Sigmoid colon (tissue), 7 donors: ENCODE measurements at regions of chrX and their contacts with region 1.

Region 1: GRCh38 chrX:53317365-53318069 is 36.1 kb upstream of the IQSEC2 start:
- DNase-seq: peak; percentile 83
- H3K4me3 ChIP-seq: no peak overlapping the region
- H3K27ac ChIP-seq: no peak overlapping the region
- H3K4me1 ChIP-seq: peaks cover 0 to 31% (median 14%) of the 10 kb centered on the region in 4 donors
- H3K27me3 ChIP-seq: peaks cover 0 to 8% (median 0%) of the 10 kb centered on the region in 3 donors
- CTCF ChIP-seq: peak; percentile 46 to 68 (median 58)
- EP300 ChIP-seq: no peak
- POLR2A ChIP-seq: no peak

Region 2: GRCh38 chrX:53284684-53285447 is 32.7 kb before region 1 on chrX:
- intact Hi-C with region 1: loop called (anchors 5 kb)
- DNase-seq: peak; percentile 83
- H3K4me3 ChIP-seq: no peak overlapping the region
- H3K27ac ChIP-seq: peak overlapping the region in 3 of 4 donors; percentile 47 to 77 (median 70)
- H3K4me1 ChIP-seq: peaks cover 0 to 69% (median 51%) of the 10 kb centered on the region in 4 donors
- H3K27me3 ChIP-seq: no peaks in the 10 kb centered on the region
- CTCF ChIP-seq: peak; percentile 54 to 70 (median 66)
- EP300 ChIP-seq: no peak
- POLR2A ChIP-seq: no peak

Region 3: GRCh38 chrX:53330331-53330730 is 12.8 kb after region 1 on chrX:
- intact Hi-C with region 1: loop called (anchors 1 kb)
- DNase-seq: no peak
- H3K4me3 ChIP-seq: no peak overlapping the region
- H3K27ac ChIP-seq: no peak overlapping the region
- H3K4me1 ChIP-seq: no peaks in the 10 kb centered on the region
- H3K27me3 ChIP-seq: no peaks in the 10 kb centered on the region
- CTCF ChIP-seq: no peak
- EP300 ChIP-seq: no peak
- POLR2A ChIP-seq: no peak

Region 4: DNA sequence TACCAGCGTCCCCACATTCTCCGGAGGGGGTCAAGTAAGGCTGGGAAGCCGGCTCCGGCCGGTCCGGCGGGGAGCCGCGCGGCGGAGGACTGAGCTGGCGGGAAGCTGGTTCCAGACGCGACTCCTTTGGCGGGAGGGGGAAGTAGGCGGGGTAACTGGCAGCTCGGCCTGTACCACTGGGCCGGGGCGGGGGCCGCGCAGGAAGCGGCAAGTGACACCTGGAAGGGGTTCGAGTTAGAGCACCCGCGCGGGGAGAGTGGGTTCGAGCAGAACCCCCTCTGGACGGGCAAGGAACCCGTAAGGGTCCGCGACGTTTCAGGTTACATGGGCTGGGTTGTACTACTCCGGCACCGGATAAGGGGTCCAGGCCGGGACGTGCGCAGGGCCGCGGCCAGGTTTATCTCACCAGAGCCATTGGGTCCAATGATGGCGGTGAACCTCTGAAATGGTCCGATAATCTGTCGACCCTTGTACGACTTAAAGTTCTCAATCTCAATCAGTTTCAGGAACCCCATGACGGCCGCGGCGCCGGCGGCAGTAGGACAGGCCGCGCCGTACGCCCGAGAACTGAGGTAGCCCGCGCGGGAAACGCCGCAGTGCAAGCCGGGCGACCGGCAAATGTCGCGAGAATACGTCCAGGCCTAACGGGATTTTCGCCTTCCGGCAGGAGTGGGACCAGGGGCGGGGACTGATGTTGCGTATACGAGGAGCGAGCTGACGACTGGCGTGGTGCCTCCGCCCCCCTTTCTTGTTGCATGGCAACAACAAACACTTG is 104.8 kb after region 1 on chrX and contains the start of gene SMC1A:
- intact Hi-C with region 1: loop called (anchors 5 kb)
- DNase-seq: peak; percentile 100
- H3K4me3 ChIP-seq: peak within 1 kb of the TSS; percentile 53 to 62 (median 56)
- H3K27ac ChIP-seq: peak within 1 kb of the TSS; percentile 89 to 91 (median 90)
- H3K4me1 ChIP-seq: peaks cover 0 to 19% (median 12%) of the 10 kb centered on the region in 4 donors
- H3K27me3 ChIP-seq: no peaks in the 10 kb centered on the region
- CTCF ChIP-seq: no peak
- EP300 ChIP-seq: no peak
- POLR2A ChIP-seq: no peak
- total RNA-seq, gene SMC1A: 27.8 to 45.7 (median 35.5) TPM

Region 5: GRCh38 chrX:53433651-53434639 is 116.4 kb after region 1 on chrX and contains the start of gene HSD17B10:
- intact Hi-C with region 1: loop called (anchors 2 kb)
- DNase-seq: peak; percentile 95
- H3K4me3 ChIP-seq: peak within 1 kb of the TSS; percentile 46 to 62 (median 55)
- H3K27ac ChIP-seq: peak within 1 kb of the TSS; percentile 66 to 80 (median 76)
- H3K4me1 ChIP-seq: peaks cover 0 to 13% (median 3%) of the 10 kb centered on the region in 4 donors
- H3K27me3 ChIP-seq: no peaks in the 10 kb centered on the region
- CTCF ChIP-seq: no peak
- EP300 ChIP-seq: no peak
- POLR2A ChIP-seq: peak in 1 of 2 donors; percentile 46
- total RNA-seq, gene HSD17B10: 44.6 to 67.4 (median 63.4) TPM

Region 6: DNA sequence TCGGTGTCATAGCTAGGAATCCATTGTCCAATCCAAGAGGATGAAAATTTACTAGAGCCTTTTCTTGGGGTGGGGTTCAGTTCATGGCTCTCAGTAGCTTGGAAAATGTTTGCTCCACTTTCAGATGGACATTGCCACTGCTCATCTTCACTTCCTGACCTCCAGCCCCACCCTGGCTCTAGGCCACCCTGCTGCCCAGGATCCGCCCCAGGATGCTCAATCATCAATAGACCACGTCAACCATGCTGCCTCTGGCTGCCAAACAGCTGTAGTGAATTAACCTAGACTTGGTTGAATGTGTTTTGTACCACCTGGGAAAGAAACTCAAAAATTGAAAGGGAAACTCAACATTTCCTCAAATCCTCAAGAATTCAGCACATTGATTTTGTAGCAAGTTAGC is 153.8 kb after region 1 on chrX:
- intact Hi-C with region 1: no loop called
- DNase-seq: no peak
- H3K4me3 ChIP-seq: no peak overlapping the region
- H3K27ac ChIP-seq: no peak overlapping the region
- H3K4me1 ChIP-seq: no peaks in the 10 kb centered on the region
- H3K27me3 ChIP-seq: no peaks in the 10 kb centered on the region
- CTCF ChIP-seq: no peak
- EP300 ChIP-seq: no peak
- POLR2A ChIP-seq: no peak

Region 7: DNA sequence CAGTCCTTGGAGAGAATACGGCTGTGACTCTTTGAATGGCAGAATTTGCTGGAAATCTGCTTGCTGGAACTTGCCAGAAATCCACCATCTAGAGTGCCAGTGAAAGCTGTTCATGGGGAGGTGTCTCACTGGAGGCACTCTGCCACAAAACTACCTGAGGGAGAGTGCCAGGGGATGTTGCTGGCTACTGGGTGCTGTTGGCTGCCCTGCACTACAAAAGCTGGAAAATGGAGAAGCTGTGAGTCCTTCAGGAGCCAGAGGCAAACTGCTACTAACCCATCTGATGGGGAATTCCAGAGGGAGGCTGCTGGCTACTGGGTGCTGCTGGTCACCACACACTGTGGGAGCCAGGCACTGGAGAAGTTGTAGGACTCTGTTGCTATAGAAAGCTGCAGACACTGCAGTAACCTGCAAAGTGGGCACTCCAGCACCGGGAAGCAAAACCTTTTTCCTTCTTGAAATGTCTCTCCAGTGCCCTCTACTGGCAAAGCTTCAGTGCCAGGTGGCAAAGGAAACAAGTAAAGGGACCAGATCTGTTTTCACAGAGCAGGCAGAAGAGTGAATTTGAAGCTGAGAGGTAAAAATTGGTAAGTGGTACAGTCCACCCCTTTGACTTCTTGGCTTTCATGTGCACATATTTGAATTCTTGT is 164.4 kb after region 1 on chrX:
- intact Hi-C with region 1: loop called (anchors 5 kb)
- DNase-seq: peak; percentile 66
- H3K4me3 ChIP-seq: no peak overlapping the region
- H3K27ac ChIP-seq: no peak overlapping the region
- H3K4me1 ChIP-seq: no peaks in the 10 kb centered on the region
- H3K27me3 ChIP-seq: no peaks in the 10 kb centered on the region
- CTCF ChIP-seq: peak in 1 of 4 experiments; percentile 45
- EP300 ChIP-seq: no peak
- POLR2A ChIP-seq: no peak